BJ (cell line): ENCODE measurements at regions of chr15 and their contacts with region 1.

Region 1: DNA sequence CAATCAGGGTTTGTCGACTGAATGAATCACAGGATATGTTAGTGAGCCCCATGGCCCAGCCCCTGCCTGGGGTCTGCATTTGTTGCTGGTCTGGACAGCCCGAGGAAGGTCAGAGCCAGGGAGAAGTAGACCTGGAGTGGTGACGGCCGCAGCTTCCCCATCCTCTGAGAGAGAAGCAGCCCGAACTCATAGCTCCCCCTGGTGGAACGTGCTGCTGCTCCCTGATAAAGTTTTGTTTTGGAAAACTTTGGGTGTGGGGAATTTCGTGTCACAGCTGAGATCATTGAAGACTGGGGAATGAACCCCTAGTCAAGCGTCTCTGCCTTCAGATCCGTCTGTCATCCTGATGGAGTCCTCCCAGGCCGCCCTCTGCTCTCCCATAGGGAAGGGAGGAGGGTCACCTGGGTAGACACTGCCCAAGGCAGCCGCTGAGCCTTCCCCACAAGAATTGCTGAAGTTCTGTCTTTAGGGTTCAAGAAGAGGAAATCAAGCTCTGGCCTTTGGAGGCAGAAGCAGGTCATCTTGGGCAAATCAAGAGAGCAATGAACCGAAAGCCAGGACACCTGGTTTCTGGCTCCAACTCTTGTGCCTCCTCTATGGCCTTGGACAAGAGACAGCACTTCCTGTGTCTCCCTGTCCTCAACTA is 60.5 kb downstream of the GLDN start:
- DNase-seq: no peak
- H3K4me3 ChIP-seq: no peak overlapping the region
- H3K27me3 ChIP-seq: peaks cover 13% of the 10 kb centered on the region
- CTCF ChIP-seq: peak; percentile 79

Region 2: GRCh38 chr15:51144021-51144532 is 257.9 kb before region 1 on chr15:
- CTCF ChIA-PET with region 1: interaction called, 11 read pairs
- POLR2A ChIA-PET with region 1: no interaction called
- DNase-seq: peak; percentile 10
- H3K4me3 ChIP-seq: no peak overlapping the region
- H3K27me3 ChIP-seq: no peaks in the 10 kb centered on the region; the same call in 1 of the 2 replicates
- CTCF ChIP-seq: no peak

Region 3: DNA sequence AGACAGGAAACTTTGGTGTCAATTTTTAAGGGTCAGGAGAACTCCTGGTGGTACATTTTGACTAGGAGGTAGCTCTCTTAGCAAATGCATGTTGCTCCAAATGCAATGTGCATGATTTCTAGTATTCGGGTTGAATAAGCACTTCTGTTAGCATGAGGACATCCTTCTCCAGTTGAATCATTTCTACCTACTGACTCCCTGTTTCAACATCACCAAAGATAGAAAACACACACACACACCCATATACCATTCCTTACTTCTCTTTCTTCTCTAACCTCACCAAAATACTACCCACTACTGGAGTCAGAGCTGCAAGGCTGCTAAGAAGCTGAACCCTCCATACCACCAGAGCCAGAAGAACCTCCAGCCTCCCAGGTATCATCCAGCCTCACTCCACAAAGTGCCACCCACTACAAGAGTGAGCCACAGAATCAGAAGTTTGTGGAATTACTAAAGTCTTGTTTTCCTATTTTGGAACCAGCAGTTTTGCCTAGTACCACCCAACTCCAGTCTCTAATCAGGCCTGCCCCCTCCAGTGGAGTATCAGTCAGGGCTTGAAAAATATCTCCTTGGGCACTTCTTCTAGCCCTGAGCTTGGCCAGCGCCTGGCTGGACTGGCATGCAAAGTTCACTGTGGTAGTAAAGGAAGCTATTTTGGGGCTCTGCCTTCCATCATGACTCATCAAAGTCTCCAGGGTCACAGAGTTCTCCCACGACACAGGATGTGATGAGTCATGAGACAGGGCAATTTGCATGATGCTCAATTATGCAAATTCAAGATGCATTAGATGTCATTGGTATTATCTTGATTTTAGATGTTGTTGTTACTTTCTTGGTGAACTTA is 173.8 kb before region 1 on chr15:
- CTCF ChIA-PET with region 1: interaction called, 17 read pairs
- POLR2A ChIA-PET with region 1: no interaction called
- DNase-seq: peak; percentile 67
- H3K4me3 ChIP-seq: no peak overlapping the region
- H3K27me3 ChIP-seq: no peaks in the 10 kb centered on the region
- CTCF ChIP-seq: no peak

Region 4: DNA sequence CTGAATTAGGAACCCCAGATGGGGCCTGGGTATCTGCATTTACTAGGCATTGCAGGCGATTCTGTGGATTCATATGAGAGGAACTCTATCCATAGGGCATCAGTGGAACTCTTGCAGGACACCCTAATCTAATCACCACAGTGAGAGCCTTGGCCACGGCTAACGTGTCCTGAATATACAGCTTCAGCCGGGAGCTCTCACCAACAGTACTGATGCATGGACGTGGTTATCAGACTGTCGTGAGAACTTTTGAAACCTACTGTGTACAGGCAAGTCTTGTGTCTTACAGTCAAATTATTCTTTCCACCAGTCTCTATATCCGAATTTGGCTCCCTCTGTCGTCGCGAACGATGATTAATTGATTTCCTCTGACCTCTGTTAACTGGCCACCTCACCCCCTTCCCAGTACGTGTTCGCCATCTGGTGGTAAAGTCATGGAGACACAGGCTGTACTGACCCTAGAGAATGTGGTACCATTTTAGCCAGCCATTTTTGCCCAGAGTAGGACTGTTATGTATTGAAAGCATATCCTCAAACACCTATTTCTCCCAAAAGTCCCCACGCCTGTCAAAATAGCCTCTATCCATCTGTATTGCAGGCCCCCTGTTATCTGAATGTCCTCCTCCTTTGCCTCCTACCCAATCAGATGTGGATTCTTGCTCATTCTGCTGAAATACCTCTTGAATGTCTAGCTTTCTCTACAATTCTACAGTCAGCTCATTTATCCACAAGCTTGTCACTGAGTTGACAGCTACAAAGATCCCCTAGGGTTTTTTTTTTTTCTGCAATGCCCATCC is 20.8 kb before region 1 on chr15:
- CTCF ChIA-PET with region 1: interaction called, 13 read pairs
- POLR2A ChIA-PET with region 1: no interaction called
- DNase-seq: no peak
- H3K4me3 ChIP-seq: no peak overlapping the region
- H3K27me3 ChIP-seq: peaks cover 2% of the 10 kb centered on the region; the same call in 1 of the 2 replicates
- CTCF ChIP-seq: peak; percentile 88

Region 5: DNA sequence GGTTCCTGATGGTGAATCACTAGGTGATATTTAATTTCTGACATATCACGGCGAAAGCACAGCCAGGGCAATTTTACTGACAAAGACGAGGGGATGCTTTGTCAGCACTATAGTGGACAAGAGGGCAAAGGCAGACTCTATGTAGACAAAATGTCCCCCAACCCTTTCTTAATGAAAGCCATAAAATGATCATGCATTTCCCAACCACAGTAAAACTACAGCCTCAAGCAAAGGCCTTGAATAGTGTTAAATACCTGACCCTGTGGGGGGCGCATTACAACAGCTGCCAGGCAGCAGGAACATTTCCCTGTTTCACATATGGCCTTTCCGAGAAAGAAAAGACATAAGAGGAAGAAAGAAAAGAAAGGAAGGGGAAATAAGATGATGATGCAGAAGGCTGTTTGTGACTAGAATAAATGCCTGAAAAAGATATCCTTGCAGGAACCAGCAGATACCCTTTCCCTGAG is 11.0 kb before region 1 on chr15:
- CTCF ChIA-PET with region 1: interaction called, 35 read pairs
- POLR2A ChIA-PET with region 1: no interaction called
- DNase-seq: no peak
- H3K4me3 ChIP-seq: no peak overlapping the region
- H3K27me3 ChIP-seq: no peaks in the 10 kb centered on the region; the same call in 1 of the 2 replicates
- CTCF ChIP-seq: no peak

Region 6: GRCh38 chr15:51414257-51415044 is 12.5 kb after region 1 on chr15:
- CTCF ChIA-PET with region 1: interaction called, 31 read pairs
- POLR2A ChIA-PET with region 1: no interaction called
- DNase-seq: no peak
- H3K4me3 ChIP-seq: no peak overlapping the region
- H3K27me3 ChIP-seq: no peaks in the 10 kb centered on the region
- CTCF ChIP-seq: no peak